Naive thymus-derived CD4-positive, alpha-beta T cell (primary cell): ENCODE measurements at regions of chr4 and their contacts with region 1.

Region 1: GRCh38 chr4:168923526-168924194 is 86.4 kb downstream of the CBR4 start:
- DNase-seq: peak in 8 of 9 donors; percentile 23 to 58 (median 42)
- ATAC-seq: peak; percentile 78
- H3K4me3 ChIP-seq: no peak overlapping the region
- H3K4me3 Mint-ChIP-seq: no peak overlapping the region
- H3K27ac ChIP-seq: no peak overlapping the region
- H3K27ac Mint-ChIP-seq: peak overlapping the region in 1 of 9 donors; percentile 78
- H3K4me1 ChIP-seq: no peaks in the 10 kb centered on the region
- H3K4me1 Mint-ChIP-seq: peaks cover 0 to 3% (median 0%) of the 10 kb centered on the region in 7 donors
- H3K27me3 ChIP-seq: no peaks in the 10 kb centered on the region
- H3K27me3 Mint-ChIP-seq: no peaks in the 10 kb centered on the region

Region 2: GRCh38 chr4:168900080-168900479 is 23.6 kb before region 1 on chr4:
- CTCF ChIA-PET with region 1: no interaction called
- POLR2A ChIA-PET with region 1: no interaction called
- intact Hi-C with region 1: no loop called
- DNase-seq: no peak
- ATAC-seq: no peak
- H3K4me3 ChIP-seq: no peak overlapping the region
- H3K4me3 Mint-ChIP-seq: no peak overlapping the region
- H3K27ac ChIP-seq: no peak overlapping the region
- H3K27ac Mint-ChIP-seq: no peak overlapping the region
- H3K4me1 ChIP-seq: no peaks in the 10 kb centered on the region
- H3K4me1 Mint-ChIP-seq: no peaks in the 10 kb centered on the region
- H3K27me3 ChIP-seq: no peaks in the 10 kb centered on the region
- H3K27me3 Mint-ChIP-seq: no peaks in the 10 kb centered on the region

Region 3: DNA sequence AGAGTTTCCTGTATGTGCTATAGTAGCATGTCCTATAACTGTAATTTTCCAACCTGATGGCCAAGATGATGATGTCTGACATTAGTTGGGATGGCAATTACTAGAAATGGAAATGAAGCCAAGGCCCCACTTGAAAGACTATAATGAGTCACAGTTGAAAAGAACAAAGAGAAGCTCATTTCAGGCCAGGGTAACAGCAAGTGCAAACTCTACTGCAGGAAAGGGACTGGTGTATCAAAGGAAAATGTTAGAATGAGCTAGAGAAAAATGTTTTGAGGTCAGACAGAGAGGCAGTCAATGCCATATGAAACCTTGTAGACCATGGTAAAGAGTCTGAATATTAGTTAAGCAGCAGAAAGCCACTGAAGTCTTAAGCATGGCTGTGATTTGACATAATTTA is 493.3 kb after region 1 on chr4:
- CTCF ChIA-PET with region 1: no interaction called
- POLR2A ChIA-PET with region 1: no interaction called
- intact Hi-C with region 1: no loop called
- DNase-seq: no peak
- ATAC-seq: no peak
- H3K4me3 ChIP-seq: no peak overlapping the region
- H3K4me3 Mint-ChIP-seq: no peak overlapping the region
- H3K27ac ChIP-seq: no peak overlapping the region
- H3K27ac Mint-ChIP-seq: no peak overlapping the region
- H3K4me1 ChIP-seq: peaks cover 0 to 9% of the 10 kb centered on the region in 2 donors
- H3K4me1 Mint-ChIP-seq: peaks cover 2 to 27% (median 9%) of the 10 kb centered on the region in 7 donors
- H3K27me3 ChIP-seq: no peaks in the 10 kb centered on the region
- H3K27me3 Mint-ChIP-seq: no peaks in the 10 kb centered on the region

Region 4: GRCh38 chr4:169492438-169493163 is 568.9 kb after region 1 on chr4:
- CTCF ChIA-PET with region 1: interaction called, 6 read pairs
- POLR2A ChIA-PET with region 1: no interaction called
- intact Hi-C with region 1: loop called in 1 of 2 experiments (anchors 1 kb)
- DNase-seq: peak in 6 of 9 donors; percentile 7 to 31 (median 18)
- ATAC-seq: peak; percentile 74
- H3K4me3 ChIP-seq: no peak overlapping the region
- H3K4me3 Mint-ChIP-seq: no peak overlapping the region
- H3K27ac ChIP-seq: no peak overlapping the region
- H3K27ac Mint-ChIP-seq: peak overlapping the region in 2 of 9 donors; percentile 57 to 68
- H3K4me1 ChIP-seq: no peaks in the 10 kb centered on the region
- H3K4me1 Mint-ChIP-seq: peaks cover 0 to 12% (median 4%) of the 10 kb centered on the region in 7 donors
- H3K27me3 ChIP-seq: no peaks in the 10 kb centered on the region
- H3K27me3 Mint-ChIP-seq: no peaks in the 10 kb centered on the region

Region 5: GRCh38 chr4:169566021-169566818 is 642.6 kb after region 1 on chr4:
- CTCF ChIA-PET with region 1: interaction called, 3 read pairs
- POLR2A ChIA-PET with region 1: no interaction called
- intact Hi-C with region 1: loop called (anchors 1 kb)
- DNase-seq: peak in 6 of 9 donors; percentile 10 to 50 (median 34)
- ATAC-seq: peak; percentile 66
- H3K4me3 ChIP-seq: no peak overlapping the region
- H3K4me3 Mint-ChIP-seq: no peak overlapping the region
- H3K27ac ChIP-seq: no peak overlapping the region
- H3K27ac Mint-ChIP-seq: peak overlapping the region in 7 of 9 donors; percentile 40 to 84 (median 65)
- H3K4me1 ChIP-seq: no peaks in the 10 kb centered on the region
- H3K4me1 Mint-ChIP-seq: peaks cover 0 to 10% (median 5%) of the 10 kb centered on the region in 7 donors
- H3K27me3 ChIP-seq: no peaks in the 10 kb centered on the region
- H3K27me3 Mint-ChIP-seq: no peaks in the 10 kb centered on the region

Region 6: GRCh38 chr4:170047771-170048354 is 1124.2 kb after region 1 on chr4:
- CTCF ChIA-PET with region 1: no interaction called
- POLR2A ChIA-PET with region 1: no interaction called
- intact Hi-C with region 1: loop called in 1 of 2 experiments (anchors 1 kb)
- DNase-seq: peak; percentile 10 to 68 (median 51)
- ATAC-seq: peak; percentile 48
- H3K4me3 ChIP-seq: no peak overlapping the region
- H3K4me3 Mint-ChIP-seq: no peak overlapping the region
- H3K27ac ChIP-seq: no peak overlapping the region
- H3K27ac Mint-ChIP-seq: peak overlapping the region in 1 of 9 donors; percentile 77
- H3K4me1 ChIP-seq: no peaks in the 10 kb centered on the region
- H3K4me1 Mint-ChIP-seq: no peaks in the 10 kb centered on the region
- H3K27me3 ChIP-seq: no peaks in the 10 kb centered on the region
- H3K27me3 Mint-ChIP-seq: peaks cover 0 to 3% (median 0%) of the 10 kb centered on the region in 5 donors